Prostate gland (tissue), 2 donors: ENCODE measurements at regions of chr3 and their contacts with region 1.

Region 1: DNA sequence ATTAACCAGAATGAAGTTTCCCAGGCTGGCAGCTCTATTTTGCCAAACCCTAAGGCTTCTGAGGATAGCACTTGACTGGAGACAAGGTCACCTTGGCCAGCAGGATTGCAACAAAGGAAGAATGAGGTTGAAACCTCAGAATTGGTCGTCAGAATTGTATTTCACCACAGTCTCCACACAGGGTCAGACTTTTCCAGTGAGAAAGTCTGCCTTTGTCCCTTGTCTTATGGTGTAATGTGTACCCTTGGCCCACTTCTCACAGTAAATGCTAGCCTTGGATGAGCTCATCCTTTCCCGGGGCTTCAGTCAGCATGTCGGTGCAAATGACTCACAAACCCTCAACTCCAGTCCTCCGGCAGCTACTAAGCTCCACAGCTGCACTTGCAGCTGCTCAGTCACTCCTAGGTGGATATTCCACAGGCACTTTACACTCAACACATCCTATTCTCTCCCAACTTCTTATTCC is 19.7 kb downstream of the SSR3 start:
- DNase-seq: no peak
- H3K4me3 ChIP-seq: no peak overlapping the region
- H3K27ac ChIP-seq: peak overlapping the region; percentile 1 to 15
- H3K4me1 ChIP-seq: no peaks in the 10 kb centered on the region
- H3K27me3 ChIP-seq: no peaks in the 10 kb centered on the region
- CTCF ChIP-seq: peak in 1 of 4 experiments; percentile 24
- POLR2A ChIP-seq: no peak

Region 2: DNA sequence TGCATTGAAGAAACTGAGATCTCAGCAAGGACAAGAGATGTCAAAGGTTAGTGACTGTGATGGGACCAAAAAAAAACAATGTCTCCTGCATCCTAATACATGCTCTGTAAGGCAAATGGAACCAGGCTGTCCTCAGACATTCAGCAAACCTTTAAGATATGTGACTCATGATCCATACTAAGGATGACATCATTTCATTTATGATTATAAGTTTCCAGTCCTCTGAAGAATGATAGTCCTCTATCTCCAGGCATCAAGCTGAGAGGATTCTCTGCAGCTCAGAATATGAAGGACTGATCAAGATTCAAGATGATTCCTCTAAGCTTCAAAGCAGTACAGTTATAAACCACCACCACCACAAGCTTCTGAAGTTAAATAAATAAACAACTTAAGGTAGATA is 27.9 kb before region 1 on chr3:
- intact Hi-C with region 1: no loop called
- DNase-seq: no peak
- H3K4me3 ChIP-seq: no peak overlapping the region
- H3K27ac ChIP-seq: no peak overlapping the region
- H3K4me1 ChIP-seq: no peaks in the 10 kb centered on the region
- H3K27me3 ChIP-seq: no peaks in the 10 kb centered on the region
- CTCF ChIP-seq: no peak
- POLR2A ChIP-seq: no peak

Region 3: DNA sequence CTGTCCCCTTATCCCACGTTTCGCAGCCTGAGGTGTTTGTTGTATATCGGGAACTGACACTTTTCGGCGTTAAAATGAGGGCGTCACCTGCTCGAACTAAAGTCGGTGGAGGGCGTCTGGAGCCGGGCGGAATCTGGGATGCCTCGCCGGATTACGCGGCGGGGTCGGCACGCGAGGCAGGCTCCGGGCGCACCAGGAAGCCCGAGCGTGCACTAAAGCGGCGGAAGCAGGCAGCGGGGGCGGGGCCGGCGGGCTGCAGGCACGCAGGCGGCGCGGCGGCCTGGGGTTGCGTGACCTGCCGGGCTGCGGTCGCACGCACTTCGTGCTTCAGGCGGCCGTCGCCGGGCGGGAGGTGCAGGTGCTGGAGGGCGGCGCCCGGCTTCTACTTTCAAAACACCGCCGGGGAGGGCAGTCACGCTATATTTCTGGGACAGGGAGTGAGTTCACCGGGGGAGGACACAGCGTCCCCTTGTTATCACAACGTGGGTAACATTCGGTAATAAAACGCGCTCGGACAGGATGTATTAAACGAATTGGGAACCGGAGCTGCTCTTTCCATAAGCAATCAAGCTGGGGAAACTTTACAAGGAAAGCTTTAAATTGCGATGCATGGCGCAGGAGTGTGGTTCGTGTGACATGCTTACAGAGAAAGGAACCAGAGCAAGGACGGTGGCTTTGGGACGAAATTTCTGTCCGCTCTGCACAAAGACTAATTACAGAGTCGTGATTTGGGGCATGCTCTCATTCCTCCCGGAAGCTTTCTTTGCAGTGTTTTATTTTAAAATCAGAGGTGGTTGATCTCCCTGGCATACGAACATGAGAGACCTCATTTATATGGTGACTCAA is 281.8 kb after region 1 on chr3:
- intact Hi-C with region 1: loop called (anchors 10 kb)
- DNase-seq: peak; percentile 78
- H3K4me3 ChIP-seq: peak overlapping the region; percentile 51 to 57
- H3K27ac ChIP-seq: peak overlapping the region; percentile 79 to 80
- H3K4me1 ChIP-seq: peaks cover 3% of the 10 kb centered on the region
- H3K27me3 ChIP-seq: no peaks in the 10 kb centered on the region
- CTCF ChIP-seq: peak in 1 of 4 experiments; percentile 25
- POLR2A ChIP-seq: no peak

Region 4: DNA sequence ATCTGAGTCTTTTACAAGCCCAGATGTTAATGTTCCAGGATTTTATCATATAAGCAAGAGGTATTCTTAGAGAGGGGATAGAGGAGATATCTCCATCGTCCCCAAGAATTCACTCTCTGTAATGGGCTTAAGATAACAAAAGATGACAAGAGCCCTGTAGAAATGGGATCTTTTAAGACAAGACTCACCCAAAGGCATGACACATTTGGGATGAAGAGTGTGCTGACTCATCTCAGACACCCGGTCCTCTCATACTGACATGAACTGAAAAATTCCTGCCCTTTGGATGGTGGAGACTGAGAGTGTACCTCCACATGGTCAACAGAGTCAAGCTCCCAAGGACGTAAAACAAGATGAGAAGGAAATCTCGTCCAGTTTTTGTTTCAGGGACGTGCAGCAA is 301.9 kb after region 1 on chr3:
- intact Hi-C with region 1: no loop called
- DNase-seq: no peak
- H3K4me3 ChIP-seq: no peak overlapping the region
- H3K27ac ChIP-seq: no peak overlapping the region
- H3K4me1 ChIP-seq: peaks cover 2% of the 10 kb centered on the region
- H3K27me3 ChIP-seq: no peaks in the 10 kb centered on the region
- CTCF ChIP-seq: no peak
- POLR2A ChIP-seq: no peak